ENCODE measurements at regions of chr1 and their contacts with region 1.

Region 1: DNA sequence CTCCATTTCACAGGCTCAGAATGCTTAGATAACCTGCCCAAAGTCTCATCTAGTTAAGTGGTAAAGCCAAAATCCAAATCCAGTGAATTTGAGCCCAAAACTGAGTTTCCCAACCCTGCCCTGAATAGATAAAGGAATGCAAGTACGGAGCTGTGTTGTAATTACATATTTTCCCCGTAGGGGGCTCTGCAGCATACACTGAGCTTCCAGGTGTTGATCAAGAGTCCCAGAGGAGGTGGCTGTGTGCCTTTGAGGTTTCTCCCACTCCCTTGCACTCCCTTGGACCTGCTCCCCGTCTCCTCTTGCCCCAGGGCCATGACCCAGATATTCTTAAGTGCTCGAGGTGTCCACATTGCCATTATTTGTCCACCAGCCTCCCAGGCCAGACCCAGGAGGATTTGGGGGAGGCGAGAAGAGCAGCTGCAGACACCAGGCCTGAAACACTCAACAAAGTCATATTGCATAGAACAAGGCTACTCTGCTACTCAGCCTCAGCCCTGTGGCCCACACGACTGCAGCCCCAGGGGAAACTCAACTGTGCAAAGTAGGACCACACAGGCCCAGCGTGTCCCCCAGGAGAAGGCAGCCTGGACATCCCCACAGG is 18.4 kb upstream of the LY9 start:
- DNase-seq: peak; percentile 87
- H3K4me3 Mint-ChIP-seq: no peak overlapping the region
- H3K27ac Mint-ChIP-seq: no peak overlapping the region
- H3K4me1 Mint-ChIP-seq: peaks cover 41% of the 10 kb centered on the region
- H3K27me3 Mint-ChIP-seq: no peaks in the 10 kb centered on the region

Region 2: GRCh38 chr1:160789702-160790611 is 12.4 kb after region 1 on chr1:
- intact Hi-C with region 1: loop called (anchors 1 kb)
- DNase-seq: peak; percentile 55
- H3K4me3 Mint-ChIP-seq: no peak overlapping the region
- H3K27ac Mint-ChIP-seq: no peak overlapping the region
- H3K4me1 Mint-ChIP-seq: no peaks in the 10 kb centered on the region
- H3K27me3 Mint-ChIP-seq: peaks cover 8% of the 10 kb centered on the region

Region 3: GRCh38 chr1:160830321-160831153 is 52.9 kb after region 1 on chr1:
- intact Hi-C with region 1: loop called (anchors 2 kb)
- DNase-seq: peak; percentile 93
- H3K4me3 Mint-ChIP-seq: no peak overlapping the region
- H3K27ac Mint-ChIP-seq: peak overlapping the region; percentile 22
- H3K4me1 Mint-ChIP-seq: peaks cover 13% of the 10 kb centered on the region
- H3K27me3 Mint-ChIP-seq: no peaks in the 10 kb centered on the region

Region 4: GRCh38 chr1:160951443-160952128 is 174.0 kb after region 1 on chr1:
- intact Hi-C with region 1: loop called (anchors 1 kb)
- DNase-seq: peak; percentile 91
- H3K4me3 Mint-ChIP-seq: no peak overlapping the region
- H3K27ac Mint-ChIP-seq: no peak overlapping the region
- H3K4me1 Mint-ChIP-seq: peaks cover 6% of the 10 kb centered on the region
- H3K27me3 Mint-ChIP-seq: peaks cover 9% of the 10 kb centered on the region

Region 5: DNA sequence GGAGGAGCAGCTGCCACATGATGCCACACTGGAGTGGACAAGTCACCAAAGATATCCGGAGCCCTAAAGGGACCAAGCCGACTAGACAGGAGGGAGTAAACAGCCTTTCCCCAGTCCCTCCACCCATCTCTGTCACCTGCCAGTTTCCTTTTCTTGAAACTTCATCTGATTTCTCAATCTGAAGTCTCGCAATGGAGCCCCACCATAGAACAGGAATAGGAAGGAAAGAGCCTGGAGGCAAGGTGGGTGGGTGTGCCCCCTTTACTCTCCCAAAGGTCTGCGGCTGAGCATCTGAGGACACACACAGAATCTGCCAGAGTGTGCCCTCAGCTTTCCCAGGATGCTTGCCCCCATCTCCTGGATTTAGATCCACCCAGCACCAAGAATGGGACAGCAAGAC is 853.5 kb after region 1 on chr1 and contains the start of gene FCGR3B:
- intact Hi-C with region 1: no loop called
- DNase-seq: no peak
- H3K4me3 Mint-ChIP-seq: no peak within 1 kb of the TSS
- H3K27ac Mint-ChIP-seq: no peak within 1 kb of the TSS
- H3K4me1 Mint-ChIP-seq: peaks cover 5% of the 10 kb centered on the region
- H3K27me3 Mint-ChIP-seq: peaks cover 4% of the 10 kb centered on the region
- total RNA-seq, gene FCGR3B: not detected in 2 replicates

Measured in activated CD4-positive, alpha-beta T cell treated with anti-CD3 and anti-CD28 coated beads, Interleukin-2, amount 10 ng/mL, durations not matched to agents 24 days and 14 days (primary cell).